ENCODE measurements at regions of chrX and their contacts with region 1.

Region 1: DNA sequence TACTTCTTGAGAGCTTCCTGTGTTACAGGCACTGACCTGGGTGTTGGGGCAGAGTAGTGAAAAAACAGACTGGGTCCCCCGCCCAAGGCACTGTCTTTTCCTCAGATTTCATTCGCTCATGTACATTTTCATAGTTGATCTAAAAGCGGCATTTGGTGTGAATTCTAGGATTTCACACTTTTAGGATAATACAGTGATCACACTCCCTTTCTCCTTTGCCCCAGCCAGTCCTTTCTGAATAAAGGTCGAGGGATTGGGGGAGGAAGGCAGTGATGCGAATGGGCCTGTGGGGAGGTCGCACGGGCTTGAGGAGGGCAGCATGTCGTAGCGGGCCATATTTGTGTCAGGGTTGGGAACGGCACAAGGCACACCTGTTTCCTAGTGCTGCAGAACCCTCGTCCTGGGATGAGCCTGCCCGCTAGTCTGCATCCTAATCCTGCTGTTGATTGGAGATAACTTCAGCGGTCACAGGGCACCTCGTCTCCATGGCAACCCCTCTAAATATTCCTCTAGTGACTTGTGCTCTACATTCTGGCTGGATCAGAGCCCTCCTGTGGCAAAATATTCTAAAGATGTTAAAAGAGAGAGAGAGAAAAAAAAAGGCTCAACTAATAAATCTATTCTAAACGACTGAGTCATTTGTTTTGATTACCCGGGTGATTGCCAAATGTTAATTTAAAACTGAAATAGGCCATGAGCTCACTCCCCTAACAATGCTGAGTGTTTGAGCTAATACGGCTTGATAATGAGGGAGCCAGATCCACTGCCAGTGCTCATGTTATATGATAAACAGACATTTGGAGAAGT is 21.8 kb downstream of the FHL1 start:
- DNase-seq: no peak

Region 2: DNA sequence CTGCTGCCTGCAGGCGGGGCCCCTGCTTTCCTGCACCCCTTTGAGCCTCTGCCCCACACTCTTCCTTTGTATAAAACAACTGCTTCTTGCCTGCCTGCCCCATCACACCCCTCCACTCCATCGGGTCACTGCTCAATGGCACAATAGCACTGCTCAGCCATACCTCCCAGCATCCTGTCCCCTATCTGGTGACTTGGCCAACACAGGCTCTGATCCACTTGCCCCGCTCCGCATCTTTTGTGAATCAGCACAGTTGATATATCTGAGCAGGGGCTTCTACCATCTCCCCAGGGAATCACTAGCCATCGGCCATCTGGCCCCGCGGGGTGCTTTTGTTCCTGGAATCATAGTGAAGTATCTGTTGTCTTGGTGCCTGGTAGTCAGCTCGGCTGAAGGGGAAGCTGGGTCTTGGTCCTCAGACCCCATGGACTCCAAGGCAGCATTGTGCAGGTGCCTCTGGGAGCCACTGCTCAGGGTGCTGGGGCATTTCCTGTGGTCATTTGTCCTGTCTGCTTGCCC is 36.8 kb after region 1 on chrX:
- intact Hi-C with region 1: loop called (anchors 2 kb)
- DNase-seq: no peak

Region 3: DNA sequence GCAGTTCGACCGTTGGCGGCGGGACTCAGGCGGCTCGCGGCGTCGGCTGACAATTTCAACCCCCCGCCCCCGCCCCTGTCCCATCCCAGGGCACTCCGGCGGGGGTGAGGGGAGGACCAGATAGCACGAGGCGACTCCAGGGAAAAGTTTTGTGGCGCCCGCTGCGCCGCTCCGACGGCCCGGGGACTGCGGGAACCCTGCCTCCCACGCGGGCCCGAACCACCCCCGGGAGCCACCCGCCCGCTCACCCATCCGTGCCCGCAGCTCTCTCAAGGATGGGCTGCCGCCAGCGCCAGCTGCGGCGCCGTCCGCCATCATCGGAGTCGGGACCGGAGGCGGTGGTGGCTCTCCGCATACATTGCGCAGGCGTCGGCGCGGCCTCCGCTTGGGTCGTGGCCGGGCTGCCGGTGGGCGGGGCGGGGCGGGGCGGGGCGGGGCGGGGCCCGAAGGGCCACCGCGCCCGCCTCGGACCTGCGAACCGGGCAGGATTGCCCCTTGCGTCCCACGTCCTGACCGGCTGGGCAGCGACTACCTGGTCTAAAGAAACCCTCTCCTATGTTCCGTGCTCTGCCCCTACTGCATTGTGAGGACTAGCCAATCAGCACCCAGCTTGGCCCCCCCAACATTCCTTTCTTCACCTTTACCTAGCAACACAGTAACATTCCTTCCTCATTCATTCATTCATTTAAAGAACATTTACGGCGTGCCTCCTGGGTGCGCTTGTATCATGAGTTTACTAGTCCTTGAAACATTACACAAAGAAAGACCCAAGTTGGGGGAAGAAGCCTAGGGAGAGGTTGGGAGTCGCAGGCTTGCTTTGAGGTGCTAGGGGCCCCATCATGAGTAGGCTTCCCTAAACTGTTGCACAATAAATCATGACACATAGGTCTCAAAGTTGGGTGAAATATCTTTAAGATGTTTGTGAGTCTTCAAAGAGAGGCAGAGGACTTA is 82.2 kb after region 1 on chrX and contains the start of gene MAP7D3:
- intact Hi-C with region 1: loop called (anchors 5 kb)
- DNase-seq: peak; percentile 87
- total RNA-seq, gene MAP7D3: 15.6 TPM

Region 4: DNA sequence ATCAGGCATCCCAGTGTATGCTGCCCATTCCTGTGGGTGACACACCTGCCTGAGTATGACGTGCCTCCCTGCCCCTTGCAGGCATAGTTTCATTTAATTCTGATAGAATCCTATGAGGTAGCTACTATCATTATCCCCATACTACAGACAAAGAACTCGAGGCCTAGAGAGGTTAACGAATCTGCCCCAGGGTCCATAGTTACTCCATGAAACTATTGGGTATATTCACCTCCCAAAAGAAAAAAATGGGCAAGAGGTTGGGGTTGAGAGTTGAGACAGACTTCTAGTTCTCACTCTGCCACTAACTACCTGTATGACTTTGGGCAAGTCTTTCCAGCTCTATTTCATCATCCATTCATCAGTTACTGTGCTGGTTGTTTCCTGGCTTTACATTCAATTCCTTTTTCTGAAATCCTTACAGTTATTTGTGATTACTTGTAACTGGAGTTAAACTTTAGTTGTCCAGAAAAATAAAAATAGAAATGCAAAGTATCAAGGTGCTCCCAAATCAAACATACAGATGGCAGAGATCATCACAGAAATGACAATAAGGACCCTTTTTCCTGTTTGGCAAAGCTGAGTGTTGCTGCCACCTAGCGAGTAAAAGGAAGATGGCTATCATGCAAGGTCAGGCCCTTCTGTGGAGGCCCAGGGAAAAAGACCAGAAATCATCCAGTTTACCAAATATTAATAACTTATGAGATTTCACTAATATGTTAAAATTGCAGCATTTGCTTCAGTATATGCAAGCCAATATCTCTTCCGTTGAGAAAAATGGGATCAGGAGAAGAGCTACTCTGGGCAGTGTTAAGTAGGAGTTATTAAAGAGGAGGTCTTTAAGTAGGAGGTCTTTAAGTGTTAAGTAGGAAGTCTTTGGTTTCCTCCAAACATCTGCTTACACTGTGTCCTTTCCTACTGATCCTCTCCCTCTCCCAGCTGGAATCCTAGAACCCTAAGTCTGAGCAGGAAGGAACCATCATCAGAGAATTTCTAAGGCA is 99.2 kb after region 1 on chrX:
- intact Hi-C with region 1: loop called (anchors 2 kb)
- DNase-seq: no peak

Region 5: DNA sequence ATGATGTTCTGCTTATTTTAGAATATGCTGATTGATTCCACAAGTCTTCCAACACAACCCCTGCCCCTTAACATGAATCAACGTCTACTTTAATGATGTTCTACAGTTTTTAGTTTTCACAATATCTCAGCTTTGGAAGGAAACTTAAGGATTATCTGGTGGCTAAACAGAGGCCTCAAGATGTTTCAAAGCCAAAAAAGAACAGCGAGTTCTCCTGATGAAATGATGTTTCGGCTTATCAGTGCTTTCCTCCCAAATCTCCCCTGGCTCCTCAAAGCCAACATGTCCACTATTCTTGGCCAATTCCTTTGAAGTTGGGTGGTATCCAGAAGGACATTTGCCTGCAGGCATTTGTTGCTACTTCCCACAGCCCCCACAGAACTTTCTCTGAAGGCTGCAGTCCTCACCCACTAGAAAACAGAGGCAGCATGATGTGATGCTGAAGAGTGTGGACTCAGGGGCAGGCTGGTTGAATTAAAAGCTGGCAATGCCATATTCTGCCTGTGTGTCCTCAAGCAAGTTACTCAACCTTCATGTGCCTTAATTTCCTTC is 218.9 kb after region 1 on chrX:
- intact Hi-C with region 1: no loop called
- DNase-seq: no peak

Measured in cardiac septum (tissue), 1 donor.